Activated naive CD4-positive, alpha-beta T cell treated with anti-CD3 and anti-CD28 coated beads for 36 hours (primary cell): ENCODE measurements at regions of chr9 and their contacts with region 1.

Region 1: GRCh38 chr9:37465249-37466036 is at the start of gene ZBTB5:
- DNase-seq: peak; percentile 99
- H3K4me3 Mint-ChIP-seq: peak within 1 kb of the TSS; percentile 93
- H3K27ac Mint-ChIP-seq: peak within 1 kb of the TSS; percentile 86
- H3K4me1 Mint-ChIP-seq: peaks cover 30% of the 10 kb centered on the region
- H3K27me3 Mint-ChIP-seq: no peaks in the 10 kb centered on the region
- total RNA-seq, gene ZBTB5: 10.2 TPM

Region 2: DNA sequence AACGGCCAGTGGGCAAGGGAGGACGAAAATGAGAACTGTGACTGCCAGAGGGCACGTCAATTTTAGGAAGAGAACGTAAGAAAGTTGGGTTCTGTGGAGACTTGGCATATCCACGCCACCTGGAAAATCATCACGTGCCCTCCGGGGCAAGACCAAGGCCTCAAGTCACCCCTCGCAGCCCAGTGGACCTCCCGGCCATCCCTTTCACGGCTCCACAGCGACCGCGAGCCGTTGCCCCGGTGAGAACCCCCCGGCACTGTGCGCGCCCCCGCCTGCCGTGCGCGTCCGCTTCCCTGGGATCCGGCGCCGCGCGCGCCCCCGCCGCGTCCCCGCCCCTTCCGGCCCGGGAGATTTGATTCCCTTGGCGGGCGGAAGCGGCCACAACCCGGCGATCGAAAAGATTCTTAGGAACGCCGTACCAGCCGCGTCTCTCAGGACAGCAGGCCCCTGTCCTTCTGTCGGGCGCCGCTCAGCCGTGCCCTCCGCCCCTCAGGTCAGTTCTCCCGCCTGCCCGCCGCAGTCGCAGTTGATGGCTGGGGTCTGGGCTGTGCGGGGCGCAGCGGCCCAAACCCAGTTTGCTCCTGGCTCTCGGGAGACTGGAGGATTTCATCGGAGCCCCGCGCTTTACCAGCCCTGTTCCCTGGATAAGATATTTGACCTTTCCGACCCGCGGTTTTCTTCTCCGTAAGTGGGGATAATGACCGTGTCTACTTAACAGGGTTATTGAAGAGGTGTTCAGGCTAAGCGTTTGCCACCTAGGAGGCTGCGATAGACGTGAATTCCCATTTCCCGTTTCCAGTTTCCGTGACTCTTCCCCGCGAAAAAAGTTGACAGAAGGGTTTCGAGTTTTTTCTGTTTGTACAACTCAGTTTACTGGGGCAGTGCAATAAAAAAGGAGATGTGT is 892.7 kb before region 1 on chr9 and contains the start of gene MELK:
- CTCF ChIA-PET with region 1: no interaction called
- intact Hi-C with region 1: no loop called
- DNase-seq: peak; percentile 86
- H3K4me3 Mint-ChIP-seq: peak within 1 kb of the TSS; percentile 95
- H3K27ac Mint-ChIP-seq: peak within 1 kb of the TSS; percentile 81
- H3K4me1 Mint-ChIP-seq: peaks cover 27% of the 10 kb centered on the region
- H3K27me3 Mint-ChIP-seq: no peaks in the 10 kb centered on the region
- total RNA-seq, gene MELK: 53.9 to 55.3 TPM

Region 3: GRCh38 chr9:36765468-36766341 is 699.7 kb before region 1 on chr9:
- CTCF ChIA-PET with region 1: no interaction called
- intact Hi-C with region 1: loop called (anchors 1 kb)
- DNase-seq: peak; percentile 95
- H3K4me3 Mint-ChIP-seq: peak overlapping the region; percentile 70
- H3K27ac Mint-ChIP-seq: no peak overlapping the region
- H3K4me1 Mint-ChIP-seq: no peaks in the 10 kb centered on the region
- H3K27me3 Mint-ChIP-seq: peaks cover 4% of the 10 kb centered on the region

Region 4: GRCh38 chr9:37053684-37054362 is 411.6 kb before region 1 on chr9:
- CTCF ChIA-PET with region 1: no interaction called
- intact Hi-C with region 1: no loop called
- DNase-seq: no peak
- H3K4me3 Mint-ChIP-seq: no peak overlapping the region
- H3K27ac Mint-ChIP-seq: no peak overlapping the region
- H3K4me1 Mint-ChIP-seq: no peaks in the 10 kb centered on the region
- H3K27me3 Mint-ChIP-seq: peaks cover 35% of the 10 kb centered on the region

Region 5: GRCh38 chr9:37079370-37080164 is 385.9 kb before region 1 on chr9:
- CTCF ChIA-PET with region 1: no interaction called
- intact Hi-C with region 1: loop called (anchors 2 kb)
- DNase-seq: peak; percentile 95
- H3K4me3 Mint-ChIP-seq: peak overlapping the region; percentile 89
- H3K27ac Mint-ChIP-seq: peak overlapping the region; percentile 95
- H3K4me1 Mint-ChIP-seq: peaks cover 39% of the 10 kb centered on the region
- H3K27me3 Mint-ChIP-seq: no peaks in the 10 kb centered on the region

Region 6: GRCh38 chr9:37302277-37302676 is 163.2 kb before region 1 on chr9:
- CTCF ChIA-PET with region 1: no interaction called
- intact Hi-C with region 1: loop called (anchors 2 kb)
- DNase-seq: peak; percentile 70
- H3K4me3 Mint-ChIP-seq: peak overlapping the region; percentile 25
- H3K27ac Mint-ChIP-seq: peak overlapping the region; percentile 92
- H3K4me1 Mint-ChIP-seq: peaks cover 59% of the 10 kb centered on the region
- H3K27me3 Mint-ChIP-seq: no peaks in the 10 kb centered on the region

Region 7: GRCh38 chr9:37485389-37486219 is 20.2 kb after region 1 on chr9 and contains the start of gene POLR1E:
- CTCF ChIA-PET with region 1: interaction called, 3 read pairs
- intact Hi-C with region 1: loop called (anchors 1 kb)
- DNase-seq: peak; percentile 97
- H3K4me3 Mint-ChIP-seq: peak within 1 kb of the TSS; percentile 99
- H3K27ac Mint-ChIP-seq: peak within 1 kb of the TSS; percentile 85
- H3K4me1 Mint-ChIP-seq: peaks cover 39% of the 10 kb centered on the region
- H3K27me3 Mint-ChIP-seq: peaks cover 6% of the 10 kb centered on the region
- total RNA-seq, gene POLR1E: 60.7 to 62.9 TPM

Region 8: DNA sequence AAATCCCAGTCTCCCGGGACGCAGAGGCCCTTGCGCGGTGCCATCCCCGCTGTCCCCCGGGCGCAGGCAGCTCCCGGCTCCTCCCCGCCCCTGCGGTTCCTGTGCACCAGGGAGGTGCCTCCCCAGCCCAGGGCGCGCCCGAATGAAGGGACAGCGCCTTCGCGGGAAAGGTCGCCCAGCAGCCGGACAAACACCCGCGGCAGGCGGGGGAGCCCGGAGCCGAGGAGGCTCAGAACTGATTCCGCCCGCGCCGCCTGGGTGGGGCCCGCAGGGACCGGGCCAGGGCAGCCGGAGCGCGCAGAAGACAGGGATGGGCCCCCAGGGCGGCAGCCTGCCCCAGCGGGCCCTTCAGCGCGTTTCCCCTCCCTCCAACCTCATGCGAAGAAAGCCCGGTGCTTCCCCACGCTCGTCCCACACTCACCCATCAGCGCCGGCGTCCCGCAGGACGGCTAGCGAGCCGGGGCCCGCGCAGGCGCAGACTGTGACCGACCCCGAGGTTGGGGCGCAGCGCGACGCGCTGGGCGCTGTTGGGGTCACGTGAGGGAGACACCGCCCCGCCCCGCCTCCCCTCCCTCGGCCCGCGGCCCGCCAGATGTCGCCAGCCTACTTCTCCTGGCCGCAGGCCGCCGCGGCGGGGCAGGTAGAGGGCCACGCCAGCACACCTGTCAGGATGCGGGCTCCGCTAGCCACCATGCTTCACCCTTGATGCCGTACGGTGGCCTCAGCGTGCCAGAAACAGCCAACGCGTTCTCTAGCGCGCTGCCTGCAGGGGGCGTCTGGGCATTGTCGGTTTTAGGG is 438.4 kb after region 1 on chr9 and contains the start of gene SLC25A51:
- CTCF ChIA-PET with region 1: no interaction called
- intact Hi-C with region 1: loop called (anchors 5 kb)
- DNase-seq: peak; percentile 97
- H3K4me3 Mint-ChIP-seq: peak within 1 kb of the TSS; percentile 85
- H3K27ac Mint-ChIP-seq: peak within 1 kb of the TSS; percentile 87
- H3K4me1 Mint-ChIP-seq: peaks cover 16% of the 10 kb centered on the region
- H3K27me3 Mint-ChIP-seq: no peaks in the 10 kb centered on the region
- total RNA-seq, gene SLC25A51: 20.0 to 20.3 TPM